H1 (cell line): ENCODE measurements at regions of chr11 and their contacts with region 1.

Region 1: GRCh38 chr11:73661035-73661628 is 14.8 kb downstream of the PLEKHB1 start:
- DNase-seq: peak; percentile 82 to 100
- H3K4me3 ChIP-seq: peak overlapping the region; percentile 3 to 54 (median 46); a peak in 7 of 8 replicates
- H3K27ac ChIP-seq: peak overlapping the region; percentile 26; the same call in 1 of the 2 replicates
- H3K4me1 ChIP-seq: peaks cover 0 to 7% (median 3%) of the 10 kb centered on the region in 4 experiments; a peak in 5 of 7 replicates
- H3K27me3 ChIP-seq: peaks cover 0 to 19% (median 14%) of the 10 kb centered on the region in 4 experiments; a peak in 4 of 7 replicates
- CTCF ChIP-seq: peak; percentile 98 to 99 (median 98)
- EP300 ChIP-seq: peak; percentile 14 to 56; a peak in 2 of 3 replicates
- POLR2A ChIP-seq: peak in 1 of 2 experiments; percentile 63; a peak in 2 of 3 replicates
- RAD21 ChIP-seq: peak; percentile 100

Region 2: DNA sequence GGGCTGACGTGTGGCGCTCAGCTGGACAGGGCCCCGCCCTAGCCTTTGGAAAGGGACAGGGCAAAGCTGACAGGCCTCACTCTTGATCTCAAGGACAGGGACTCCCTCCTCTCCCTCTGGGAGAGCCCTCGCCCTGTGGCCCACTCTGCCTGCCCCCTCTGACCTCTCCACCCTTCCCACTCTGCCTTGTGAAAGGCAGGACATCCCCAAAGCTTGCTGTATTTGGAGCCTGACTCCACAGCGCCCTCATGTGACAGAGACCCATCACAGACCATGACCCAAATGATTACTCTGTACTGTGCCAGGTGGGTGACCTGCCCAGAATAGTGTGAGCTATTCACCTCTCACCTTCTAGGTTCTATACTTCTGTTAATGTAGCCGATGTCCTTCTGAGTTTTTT is 424.3 kb before region 1 on chr11:
- CTCF ChIA-PET with region 1: no interaction called
- POLR2A ChIA-PET with region 1: no interaction called
- DNase-seq: peak in 1 of 2 experiments; percentile 87
- H3K4me3 ChIP-seq: no peak overlapping the region
- H3K27ac ChIP-seq: no peak overlapping the region
- H3K4me1 ChIP-seq: peaks cover 0 to 4% (median 3%) of the 10 kb centered on the region in 4 experiments; a peak in 3 of 7 replicates
- H3K27me3 ChIP-seq: no peaks in the 10 kb centered on the region
- CTCF ChIP-seq: peak; percentile 90 to 93 (median 91)
- EP300 ChIP-seq: no peak
- POLR2A ChIP-seq: no peak
- RAD21 ChIP-seq: peak; percentile 89 to 91

Region 3: DNA sequence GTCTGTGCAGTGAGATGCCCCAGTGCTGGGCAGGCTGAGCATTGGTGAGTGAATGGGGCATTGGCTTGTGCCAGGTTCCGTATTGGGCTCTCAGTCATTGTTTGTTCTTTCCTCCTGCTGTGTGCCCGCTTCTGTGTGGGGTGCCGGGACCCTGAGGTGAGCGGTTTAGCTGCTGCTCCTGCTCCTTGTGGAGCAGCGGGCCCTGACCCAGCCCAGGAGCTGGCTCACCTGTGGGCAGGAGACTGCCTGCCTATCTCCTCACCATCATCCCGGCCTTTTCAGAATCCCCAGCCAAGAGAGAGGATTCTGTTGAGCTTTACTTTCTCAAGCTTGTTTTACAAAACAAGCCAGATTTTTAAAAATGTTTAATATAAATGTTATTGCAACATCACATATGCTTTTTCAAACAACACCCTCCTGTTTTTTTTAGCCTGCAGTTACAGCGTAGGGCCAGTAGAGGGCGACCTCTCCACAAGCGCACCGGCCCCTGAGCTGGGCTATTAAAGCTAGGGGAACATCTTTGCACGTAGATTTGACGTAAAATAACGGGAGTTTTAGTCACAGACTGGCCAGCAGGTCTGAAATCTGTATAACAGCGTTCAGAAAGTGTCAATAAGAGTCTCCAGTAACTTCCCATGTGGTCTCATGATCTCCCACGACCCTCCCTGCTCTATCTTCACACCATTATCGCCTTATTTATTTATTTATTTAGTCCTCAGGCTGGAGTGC is 310.1 kb before region 1 on chr11:
- CTCF ChIA-PET with region 1: interaction called, 14 read pairs
- POLR2A ChIA-PET with region 1: no interaction called
- DNase-seq: peak in 1 of 2 experiments; percentile 63
- H3K4me3 ChIP-seq: no peak overlapping the region
- H3K27ac ChIP-seq: no peak overlapping the region
- H3K4me1 ChIP-seq: no peaks in the 10 kb centered on the region; a peak in 2 of 7 replicates
- H3K27me3 ChIP-seq: no peaks in the 10 kb centered on the region
- CTCF ChIP-seq: peak; percentile 82 to 88 (median 85)
- EP300 ChIP-seq: no peak
- POLR2A ChIP-seq: no peak
- RAD21 ChIP-seq: peak; percentile 65 to 74

Region 4: DNA sequence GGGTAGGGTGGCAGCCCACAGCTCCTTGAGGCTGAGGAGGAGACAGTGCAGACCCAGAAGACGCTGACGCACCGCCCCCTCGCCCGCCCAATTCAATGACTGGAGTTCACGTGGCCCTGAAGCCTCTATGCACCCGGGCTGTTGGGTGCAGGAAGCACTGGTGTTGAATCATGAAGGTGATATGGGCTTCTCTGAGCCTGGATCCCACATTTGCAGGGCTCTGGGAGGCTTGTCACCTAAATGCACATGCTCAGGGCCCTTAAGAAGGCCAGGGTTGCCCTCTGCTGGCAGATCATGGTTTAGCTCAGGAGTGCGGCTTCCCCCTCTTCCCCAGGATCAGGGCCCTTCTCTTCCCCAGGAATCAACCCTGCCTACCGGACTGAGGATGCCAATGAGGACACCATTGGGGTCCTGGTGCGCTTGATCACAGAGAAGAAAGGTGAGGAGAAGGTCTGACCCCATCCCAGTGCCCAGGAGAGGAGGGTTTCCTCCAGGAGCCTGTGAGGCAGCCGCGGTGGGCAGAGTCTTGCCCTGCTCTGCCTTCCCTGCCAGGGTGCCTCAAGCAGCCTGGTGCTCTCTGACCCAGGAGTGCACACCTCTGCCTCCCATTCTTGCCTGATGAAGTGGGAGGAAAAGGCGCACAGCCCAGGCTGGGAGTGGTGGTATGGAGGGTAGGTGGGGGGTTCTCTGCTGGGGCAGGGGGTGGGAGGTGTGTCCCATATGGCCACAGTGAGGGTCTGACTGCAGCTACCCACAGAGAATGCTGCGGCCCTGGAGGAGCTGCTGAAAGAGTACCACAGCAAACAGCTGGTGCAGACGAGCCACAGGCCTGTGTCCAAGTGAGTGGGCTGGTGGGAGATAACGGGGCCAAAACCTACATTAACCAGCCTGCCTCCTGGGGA is 267.4 kb before region 1 on chr11:
- CTCF ChIA-PET with region 1: interaction called, 83 read pairs
- POLR2A ChIA-PET with region 1: no interaction called
- DNase-seq: peak; percentile 61 to 89
- H3K4me3 ChIP-seq: no peak overlapping the region
- H3K27ac ChIP-seq: no peak overlapping the region
- H3K4me1 ChIP-seq: no peaks in the 10 kb centered on the region; a peak in 1 of 7 replicates
- H3K27me3 ChIP-seq: no peaks in the 10 kb centered on the region
- CTCF ChIP-seq: peak; percentile 89 to 99 (median 96)
- EP300 ChIP-seq: no peak
- POLR2A ChIP-seq: no peak
- RAD21 ChIP-seq: peak; percentile 95 to 97

Region 5: DNA sequence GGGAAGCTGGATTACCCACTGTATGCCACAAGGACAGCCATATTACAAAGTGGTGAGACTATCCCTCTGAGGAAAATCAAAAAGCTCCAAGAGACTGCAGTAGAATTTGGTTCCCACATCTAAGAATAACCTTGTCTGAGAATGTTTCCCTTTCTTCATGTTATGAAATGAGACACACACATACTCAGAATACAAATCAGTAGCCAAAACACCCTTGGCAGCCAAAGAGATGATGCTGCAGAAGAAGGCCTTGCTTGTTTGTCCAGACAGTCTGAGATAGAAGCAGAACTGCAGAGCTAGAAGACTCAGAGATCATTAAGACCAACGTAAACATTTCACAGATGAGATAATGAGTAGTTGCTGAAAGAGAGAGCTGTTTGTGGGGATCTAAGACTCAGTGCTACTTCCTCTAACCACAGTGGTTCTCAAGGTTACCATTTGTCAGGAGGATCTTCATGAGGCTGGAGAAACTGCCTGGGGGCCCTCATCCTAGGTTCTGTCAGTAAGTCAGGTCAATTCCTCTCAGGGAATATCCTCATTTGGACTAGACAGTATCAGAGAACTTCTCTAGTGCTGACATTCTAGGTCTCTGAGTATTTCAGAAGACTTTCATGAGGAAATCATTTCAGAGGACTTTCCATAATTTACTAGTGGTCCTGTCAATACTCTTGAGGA is 246.0 kb before region 1 on chr11:
- CTCF ChIA-PET with region 1: interaction called, 27 read pairs
- POLR2A ChIA-PET with region 1: no interaction called
- DNase-seq: no peak
- H3K4me3 ChIP-seq: no peak overlapping the region
- H3K27ac ChIP-seq: no peak overlapping the region
- H3K4me1 ChIP-seq: no peaks in the 10 kb centered on the region
- H3K27me3 ChIP-seq: no peaks in the 10 kb centered on the region
- CTCF ChIP-seq: no peak
- EP300 ChIP-seq: no peak
- POLR2A ChIP-seq: no peak
- RAD21 ChIP-seq: no peak

Region 6: GRCh38 chr11:73625696-73626318 is 35.3 kb before region 1 on chr11:
- CTCF ChIA-PET with region 1: interaction called, 653 read pairs
- POLR2A ChIA-PET with region 1: interaction called, 24 read pairs
- DNase-seq: peak; percentile 39 to 90
- H3K4me3 ChIP-seq: no peak overlapping the region
- H3K27ac ChIP-seq: no peak overlapping the region
- H3K4me1 ChIP-seq: peaks cover 0 to 8% (median 3%) of the 10 kb centered on the region in 4 experiments; a peak in 5 of 7 replicates
- H3K27me3 ChIP-seq: peaks cover 7 to 36% (median 28%) of the 10 kb centered on the region in 4 experiments; a peak in 6 of 7 replicates
- CTCF ChIP-seq: peak; percentile 89 to 96 (median 93)
- EP300 ChIP-seq: no peak
- POLR2A ChIP-seq: no peak
- RAD21 ChIP-seq: peak; percentile 93 to 96

Region 7: GRCh38 chr11:73671701-73672100 is 10.6 kb after region 1 on chr11:
- CTCF ChIA-PET with region 1: interaction called, 31 read pairs
- POLR2A ChIA-PET with region 1: interaction called, 5 read pairs
- DNase-seq: no peak
- H3K4me3 ChIP-seq: no peak overlapping the region
- H3K27ac ChIP-seq: no peak overlapping the region
- H3K4me1 ChIP-seq: no peaks in the 10 kb centered on the region
- H3K27me3 ChIP-seq: no peaks in the 10 kb centered on the region
- CTCF ChIP-seq: no peak
- EP300 ChIP-seq: no peak
- POLR2A ChIP-seq: no peak
- RAD21 ChIP-seq: no peak

Region 8: GRCh38 chr11:73705053-73705452 is 43.9 kb after region 1 on chr11:
- CTCF ChIA-PET with region 1: no interaction called
- POLR2A ChIA-PET with region 1: no interaction called
- DNase-seq: no peak
- H3K4me3 ChIP-seq: no peak overlapping the region
- H3K27ac ChIP-seq: no peak overlapping the region
- H3K4me1 ChIP-seq: no peaks in the 10 kb centered on the region
- H3K27me3 ChIP-seq: no peaks in the 10 kb centered on the region
- CTCF ChIP-seq: no peak
- EP300 ChIP-seq: no peak
- POLR2A ChIP-seq: no peak
- RAD21 ChIP-seq: no peak